Posterior vena cava (tissue), 2 donors: ENCODE measurements at regions of chr12 and their contacts with region 1.

Region 1: DNA sequence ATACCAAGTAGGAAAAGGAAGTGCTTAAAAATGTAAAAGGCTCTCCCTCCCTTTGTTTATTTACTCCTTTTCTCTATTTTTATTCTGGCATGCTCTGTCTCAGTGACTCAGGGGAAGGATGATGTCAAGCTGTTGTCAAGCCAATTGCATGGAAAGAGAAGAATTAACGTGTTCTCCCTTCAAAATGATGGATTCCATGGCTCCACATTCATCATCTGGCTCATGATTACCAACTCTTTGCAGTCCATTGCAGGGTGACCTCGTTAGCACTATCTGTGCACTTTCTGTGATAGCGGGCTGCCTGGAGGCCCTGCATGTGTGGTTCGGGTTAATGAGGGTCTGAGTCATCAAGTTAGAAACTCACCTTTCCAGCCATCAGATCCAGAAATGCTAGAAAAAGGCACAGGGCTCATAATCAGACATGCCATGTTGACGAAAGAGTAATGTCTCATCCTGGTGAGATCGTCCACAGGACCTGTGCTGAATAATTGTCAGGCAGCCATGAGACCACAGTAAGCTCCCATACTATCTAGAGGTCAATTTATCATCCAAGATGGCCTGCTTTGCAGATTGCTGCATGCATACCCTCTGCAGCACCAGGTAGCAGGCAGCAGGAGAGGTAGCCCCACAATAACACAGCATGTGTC is 79.2 kb upstream of the BTG1 start:
- DNase-seq: no peak

Region 2: GRCh38 chr12:92145731-92146496 is 78.9 kb before region 1 on chr12 and contains the start of gene BTG1:
- intact Hi-C with region 1: no loop called
- DNase-seq: peak; percentile 99
- total RNA-seq, gene BTG1: 78.5 to 81.8 TPM

Region 3: DNA sequence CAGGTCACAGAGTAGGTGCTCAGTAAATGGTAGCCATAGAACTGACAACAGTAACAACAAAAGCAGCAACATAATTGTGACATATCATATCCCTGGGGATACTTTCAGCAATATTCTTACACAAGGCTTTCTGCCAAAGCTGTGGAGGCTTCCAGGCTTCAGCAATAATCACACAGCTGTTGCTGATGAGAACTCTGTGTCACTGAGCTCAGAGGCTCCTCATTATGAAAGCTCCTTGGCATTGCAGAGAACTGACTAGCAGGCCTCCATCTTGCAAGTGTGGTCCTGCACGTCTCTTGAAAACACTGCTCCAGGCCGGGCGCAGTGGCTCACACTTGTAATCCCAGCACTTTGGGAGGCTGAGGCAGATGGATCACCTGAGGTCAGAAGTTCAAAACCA is 18.1 kb after region 1 on chr12:
- intact Hi-C with region 1: loop called in 1 of 2 experiments (anchors 1 kb)
- DNase-seq: no peak